ENCODE measurements at regions of chr3 and their contacts with region 1.

Region 1: DNA sequence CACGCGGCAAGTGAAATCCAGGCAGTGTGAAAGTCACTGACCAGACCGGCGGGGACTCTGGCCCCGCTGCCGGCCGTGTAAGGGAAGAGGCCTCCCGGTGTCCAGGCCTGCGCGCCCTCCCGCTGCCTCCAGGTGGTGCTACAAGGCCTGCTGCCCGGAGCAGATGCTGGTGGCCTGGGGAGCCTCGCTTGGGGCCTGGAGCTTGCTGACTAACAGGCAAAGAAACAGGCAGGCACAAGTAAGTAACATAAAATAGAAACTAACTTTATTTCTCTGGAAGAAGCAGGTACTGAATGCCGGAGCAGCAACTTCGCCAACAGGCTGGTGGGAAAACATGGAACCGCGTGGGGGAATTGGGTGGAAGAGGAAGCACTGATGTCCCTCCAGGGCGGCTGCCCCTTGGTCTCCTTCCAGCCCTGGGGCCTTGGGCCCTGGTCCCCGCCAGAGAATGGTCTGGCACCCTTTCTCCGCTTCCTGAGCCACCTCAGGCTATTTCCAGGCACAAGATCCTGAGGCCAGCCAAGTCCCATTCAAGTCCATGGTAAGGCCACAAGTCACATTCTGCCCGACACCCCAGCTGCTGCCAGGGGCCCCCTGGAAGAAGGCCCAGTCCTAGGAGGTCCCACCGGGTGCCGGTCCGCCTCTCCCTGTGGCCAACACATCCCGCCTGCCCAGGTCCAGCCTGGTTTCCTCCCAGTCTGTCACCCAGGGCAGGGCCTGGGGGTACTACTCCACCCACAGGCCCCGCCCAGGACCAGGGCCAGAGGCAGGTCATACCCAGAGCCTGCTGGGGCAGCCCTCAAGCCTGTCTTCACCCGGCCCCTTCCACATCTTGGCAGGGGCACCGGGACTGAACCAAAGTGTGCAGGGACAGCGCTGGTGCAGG is 45.0 kb downstream of the TNK2 start:
- DNase-seq: peak; percentile 80 to 99 (median 92)

Region 2: DNA sequence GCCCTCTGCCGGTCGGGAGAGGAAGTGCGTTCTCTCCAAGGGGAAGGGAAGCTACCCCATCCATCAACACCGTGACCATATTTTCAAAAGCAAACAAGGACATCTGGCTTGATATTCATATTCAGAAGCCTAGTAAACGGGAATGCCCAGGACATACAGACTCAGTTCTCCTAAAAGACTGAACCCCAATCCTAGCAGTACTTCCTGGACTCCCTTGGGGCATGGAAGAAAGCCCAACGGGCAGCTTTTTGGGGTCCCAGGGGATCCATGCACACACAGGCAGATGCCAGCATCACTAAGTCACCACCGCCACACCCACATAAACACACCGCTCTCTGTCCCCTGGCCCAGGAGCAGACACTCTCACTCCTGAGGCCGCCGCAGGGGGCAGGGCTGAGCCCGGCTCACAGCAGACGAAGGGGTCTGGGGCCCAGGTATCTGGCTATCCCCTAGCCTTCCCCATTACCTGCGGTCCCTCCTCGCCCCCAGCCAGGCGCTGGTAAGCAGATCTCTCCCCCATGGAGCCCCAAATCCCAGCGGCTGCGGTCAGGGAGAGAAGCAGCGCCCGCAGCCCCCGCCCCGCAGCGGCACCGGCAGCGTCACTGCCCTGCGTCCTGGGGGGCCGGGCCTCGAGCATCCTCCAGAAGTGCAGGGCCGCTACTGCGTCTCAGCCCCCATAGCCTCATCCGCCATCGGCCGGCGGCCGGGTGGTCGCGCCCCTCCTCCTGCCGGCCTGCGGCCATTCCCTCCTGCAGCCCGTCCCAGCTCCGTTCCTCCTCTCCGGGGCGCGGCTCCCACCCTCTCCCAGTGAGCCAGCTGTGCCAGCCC is 31.6 kb after region 1 on chr3:
- intact Hi-C with region 1: loop called (anchors 1 kb)
- DNase-seq: peak in 9 of 10 donors; percentile 36 to 94 (median 65)

Region 3: GRCh38 chr3:195914648-195915473 is 51.5 kb after region 1 on chr3:
- intact Hi-C with region 1: loop called (anchors 1 kb)
- DNase-seq: peak; percentile 81 to 99 (median 96)